IMR-90 (cell line): ENCODE measurements at regions of chr1 and their contacts with region 1.

Region 1: DNA sequence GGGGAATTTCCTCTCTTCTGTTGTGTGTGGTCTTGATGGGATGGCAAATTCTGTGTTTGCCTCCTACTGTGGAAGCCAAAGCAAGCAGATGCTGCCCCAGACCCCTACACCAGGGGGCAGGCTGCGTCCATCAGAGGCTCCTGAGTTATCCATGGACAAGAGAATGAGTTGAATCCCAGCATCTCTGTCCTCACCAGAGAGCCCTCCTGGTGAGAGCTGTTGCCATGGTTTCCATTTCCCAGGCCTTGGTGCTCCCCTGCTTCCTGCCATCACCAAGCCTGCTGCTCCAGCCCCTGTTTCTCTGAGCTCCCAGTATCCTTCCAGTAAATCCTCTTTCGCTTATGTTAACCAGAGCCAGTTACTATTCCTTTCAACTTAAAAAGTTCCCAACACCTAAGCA is 20.4 kb upstream of the GNG12 start:
- DNase-seq: peak; percentile 86
- ATAC-seq: peak; percentile 81
- H3K4me3 ChIP-seq: no peak overlapping the region
- H3K27ac ChIP-seq: no peak overlapping the region
- H3K4me1 ChIP-seq: peaks cover 8% of the 10 kb centered on the region
- H3K27me3 ChIP-seq: no peaks in the 10 kb centered on the region
- CTCF ChIP-seq: peak; percentile 97
- POLR2A ChIP-seq: peak; percentile 54; the same call in 1 of the 2 replicates
- RAD21 ChIP-seq: peak; percentile 99

Region 2: GRCh38 chr1:67535474-67535873 is 318.2 kb before region 1 on chr1:
- CTCF ChIA-PET with region 1: interaction called, 3 read pairs
- POLR2A ChIA-PET with region 1: no interaction called
- dilution Hi-C with region 1: no loop called
- in situ Hi-C with region 1: loop called (anchors 10 kb)
- intact Hi-C with region 1: loop called (anchors 5 kb)
- DNase-seq: peak; percentile 87
- ATAC-seq: peak; percentile 82
- H3K4me3 ChIP-seq: no peak overlapping the region
- H3K27ac ChIP-seq: no peak overlapping the region
- H3K4me1 ChIP-seq: peaks cover 2% of the 10 kb centered on the region; the same call in 1 of the 2 replicates
- H3K27me3 ChIP-seq: no peaks in the 10 kb centered on the region
- CTCF ChIP-seq: peak; percentile 99
- POLR2A ChIP-seq: 0 out of 2 replicates have a peak, but pooled peaks have one; percentile 21
- RAD21 ChIP-seq: peak; percentile 98

Region 3: DNA sequence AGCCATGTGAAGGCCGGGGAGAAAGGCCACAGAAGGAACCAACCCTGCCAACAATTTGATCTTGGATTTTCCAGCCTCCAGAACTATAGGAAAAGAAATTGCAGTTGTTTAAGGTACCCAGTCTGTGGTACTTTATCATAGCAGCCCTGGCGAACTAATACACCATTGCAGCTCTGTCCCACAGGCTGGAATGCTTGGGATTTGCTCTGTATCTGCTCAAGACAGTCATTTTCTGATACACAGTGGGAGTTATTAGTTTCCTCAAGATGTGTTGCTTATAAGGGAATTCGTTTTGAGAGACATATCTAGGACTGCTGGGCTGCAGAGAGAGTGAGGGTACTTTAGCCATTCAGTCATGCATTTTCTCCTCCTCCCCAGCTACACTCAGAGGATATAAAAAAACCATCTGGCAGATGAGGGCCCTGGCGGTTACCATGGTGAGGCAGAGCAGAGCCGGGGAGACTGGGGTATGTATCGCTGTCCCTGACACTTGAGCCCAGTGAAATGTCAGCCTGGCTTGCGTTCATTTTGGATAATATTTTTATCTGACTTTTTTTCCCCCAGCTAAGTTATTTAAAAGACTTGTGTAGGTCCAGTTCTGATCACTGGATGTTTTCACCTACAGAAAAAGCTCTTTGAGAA is 92.2 kb after region 1 on chr1:
- CTCF ChIA-PET with region 1: no interaction called
- POLR2A ChIA-PET with region 1: no interaction called
- dilution Hi-C with region 1: no loop called
- in situ Hi-C with region 1: no loop called
- intact Hi-C with region 1: loop called (anchors 5 kb)
- DNase-seq: peak; percentile 16
- ATAC-seq: no peak
- H3K4me3 ChIP-seq: no peak overlapping the region
- H3K27ac ChIP-seq: no peak overlapping the region
- H3K4me1 ChIP-seq: peaks cover 23% of the 10 kb centered on the region
- H3K27me3 ChIP-seq: no peaks in the 10 kb centered on the region
- CTCF ChIP-seq: no peak
- POLR2A ChIP-seq: no peak
- RAD21 ChIP-seq: no peak

Region 4: DNA sequence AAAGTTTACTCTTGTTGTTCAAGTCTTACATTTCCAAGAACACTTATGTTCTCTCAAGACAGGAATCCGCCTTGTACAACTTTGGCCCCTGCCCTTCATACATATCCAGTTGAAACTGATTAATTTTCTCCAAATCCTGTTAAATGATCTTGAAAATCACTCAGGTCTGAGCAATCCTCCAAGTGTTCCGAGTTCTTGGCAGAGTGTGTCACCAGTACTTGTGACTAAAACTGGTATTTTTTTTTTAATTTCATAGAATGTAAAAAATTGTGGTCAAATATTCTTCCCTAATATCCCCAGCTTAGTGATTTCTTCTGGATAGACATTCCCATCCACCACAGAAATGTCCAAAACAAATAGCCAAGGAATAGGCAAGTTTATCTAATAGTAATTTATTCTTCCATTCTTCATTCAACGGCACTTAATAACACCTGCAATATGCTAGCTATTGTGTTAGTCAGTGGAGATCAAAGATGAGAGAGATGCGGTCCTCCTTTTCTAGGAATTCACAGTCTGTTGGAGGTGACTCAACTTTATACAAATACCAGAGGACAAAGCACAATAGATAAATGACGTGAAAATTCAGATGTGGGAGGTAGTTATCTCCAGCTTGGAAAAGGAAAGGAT is 125.3 kb after region 1 on chr1:
- CTCF ChIA-PET with region 1: no interaction called
- POLR2A ChIA-PET with region 1: no interaction called
- dilution Hi-C with region 1: no loop called
- in situ Hi-C with region 1: no loop called
- intact Hi-C with region 1: no loop called
- DNase-seq: peak; percentile 88
- ATAC-seq: peak; percentile 44
- H3K4me3 ChIP-seq: no peak overlapping the region
- H3K27ac ChIP-seq: no peak overlapping the region
- H3K4me1 ChIP-seq: no peaks in the 10 kb centered on the region; the same call in 1 of the 2 replicates
- H3K27me3 ChIP-seq: no peaks in the 10 kb centered on the region
- CTCF ChIP-seq: no peak
- POLR2A ChIP-seq: no peak
- RAD21 ChIP-seq: no peak

Region 5: GRCh38 chr1:68010090-68010489 is 156.4 kb after region 1 on chr1:
- CTCF ChIA-PET with region 1: interaction called, 7 read pairs
- POLR2A ChIA-PET with region 1: no interaction called
- dilution Hi-C with region 1: no loop called
- in situ Hi-C with region 1: loop called (anchors 10 kb)
- intact Hi-C with region 1: loop called (anchors 1 kb)
- DNase-seq: peak; percentile 47
- ATAC-seq: peak; percentile 59
- H3K4me3 ChIP-seq: no peak overlapping the region
- H3K27ac ChIP-seq: no peak overlapping the region
- H3K4me1 ChIP-seq: no peaks in the 10 kb centered on the region; the same call in 1 of the 2 replicates
- H3K27me3 ChIP-seq: no peaks in the 10 kb centered on the region
- CTCF ChIP-seq: peak; percentile 58
- POLR2A ChIP-seq: no peak
- RAD21 ChIP-seq: peak; percentile 70

Region 6: DNA sequence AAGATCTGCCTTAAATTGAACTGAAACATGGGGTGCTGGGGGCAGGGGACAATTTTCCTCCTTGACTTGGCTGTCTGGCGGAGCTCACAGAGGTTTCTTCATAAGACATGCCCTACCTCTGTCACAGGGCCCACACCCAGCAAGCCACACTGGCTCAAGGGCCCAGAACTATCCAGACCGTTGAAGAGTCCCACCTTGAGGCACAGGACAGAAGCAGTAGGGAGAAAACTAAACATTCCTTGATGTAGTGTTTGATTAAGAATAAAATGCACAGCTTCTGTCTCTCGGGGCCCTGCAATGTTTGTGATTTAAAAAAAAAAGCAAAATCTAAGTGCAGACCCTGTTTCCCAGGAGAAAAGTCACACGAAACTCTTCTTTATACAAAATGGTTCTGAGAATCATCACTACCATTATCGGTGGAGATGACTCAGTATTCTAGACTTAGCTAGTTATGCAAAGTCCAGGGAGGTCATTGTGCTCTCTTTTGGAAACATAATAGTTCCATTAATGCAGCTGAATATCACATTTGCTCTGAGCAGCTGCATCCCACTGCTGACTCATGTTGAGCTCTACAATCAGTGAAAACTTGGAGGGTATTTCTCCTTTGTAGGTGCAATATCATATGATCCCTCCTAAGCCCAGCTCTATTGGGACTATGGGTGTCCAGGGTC is 250.3 kb after region 1 on chr1:
- CTCF ChIA-PET with region 1: interaction called, 3 read pairs
- POLR2A ChIA-PET with region 1: no interaction called
- dilution Hi-C with region 1: no loop called
- in situ Hi-C with region 1: loop called (anchors 5 kb)
- intact Hi-C with region 1: no loop called
- DNase-seq: peak; percentile 94
- ATAC-seq: peak; percentile 91
- H3K4me3 ChIP-seq: no peak overlapping the region
- H3K27ac ChIP-seq: peak overlapping the region; percentile 80
- H3K4me1 ChIP-seq: peaks cover 7% of the 10 kb centered on the region
- H3K27me3 ChIP-seq: no peaks in the 10 kb centered on the region
- CTCF ChIP-seq: no peak
- POLR2A ChIP-seq: no peak
- RAD21 ChIP-seq: peak; percentile 1; the same call in 1 of the 2 replicates

Region 7: GRCh38 chr1:68346188-68346808 is 492.6 kb after region 1 on chr1:
- CTCF ChIA-PET with region 1: interaction called, 5 read pairs
- POLR2A ChIA-PET with region 1: no interaction called
- dilution Hi-C with region 1: no loop called
- in situ Hi-C with region 1: loop called (anchors 10 kb)
- intact Hi-C with region 1: loop called (anchors 2 kb)
- DNase-seq: peak; percentile 46
- ATAC-seq: 0 out of 2 replicates have a peak, but pooled peaks have one; percentile 35
- H3K4me3 ChIP-seq: no peak overlapping the region
- H3K27ac ChIP-seq: no peak overlapping the region
- H3K4me1 ChIP-seq: peaks cover 2% of the 10 kb centered on the region
- H3K27me3 ChIP-seq: no peaks in the 10 kb centered on the region
- CTCF ChIP-seq: peak; percentile 51
- POLR2A ChIP-seq: no peak
- RAD21 ChIP-seq: peak; percentile 36